ENCODE measurements at regions of chr16 and their contacts with region 1.

Region 1: DNA sequence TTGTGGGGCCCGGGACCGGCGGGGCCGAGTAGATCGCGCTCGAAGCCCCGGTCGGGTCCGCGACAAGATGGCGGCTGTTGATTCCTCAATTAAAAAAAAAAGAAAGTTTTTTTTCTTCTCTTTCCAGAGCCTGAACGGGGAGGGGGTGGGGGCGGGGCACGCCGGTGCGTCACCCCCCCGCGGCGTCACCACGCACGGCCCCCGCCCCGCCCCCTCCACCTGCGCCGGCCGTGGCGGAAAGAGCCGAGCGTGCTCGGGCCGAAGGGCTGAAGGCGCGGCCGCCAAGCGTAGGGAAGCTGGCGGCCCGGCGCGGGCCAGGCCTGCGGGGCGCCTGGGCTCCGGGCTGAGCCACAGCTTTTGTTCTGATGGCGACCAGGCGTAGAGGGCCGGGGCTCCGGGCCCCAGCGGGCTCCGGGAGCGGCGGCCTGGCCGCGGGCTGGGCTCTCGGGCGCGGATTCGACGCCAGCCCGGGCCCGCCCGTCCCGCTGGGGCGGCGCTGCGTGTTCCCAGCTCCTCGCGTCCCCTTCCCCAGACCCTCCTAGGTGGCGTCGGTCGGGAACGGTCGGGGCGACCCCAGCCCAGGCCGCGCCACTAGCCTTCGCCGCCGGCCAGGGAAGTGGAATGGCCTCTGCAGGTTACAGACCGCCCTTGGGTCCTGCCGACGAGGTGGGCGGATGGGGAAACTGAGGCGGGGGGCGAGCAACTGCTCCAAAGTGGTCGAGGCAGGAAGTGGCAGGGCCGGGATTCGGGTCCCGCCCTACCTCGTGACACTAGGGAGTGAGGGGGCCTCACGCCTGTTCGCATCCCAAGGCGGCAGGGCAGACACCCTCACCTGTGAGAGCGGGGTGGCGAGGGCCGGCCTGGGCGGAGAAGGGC is at the start of gene CREBBP:
- DNase-seq: peak; percentile 94
- ATAC-seq: peak; percentile 94
- total RNA-seq, gene CREBBP: 38.0 TPM

Region 2: DNA sequence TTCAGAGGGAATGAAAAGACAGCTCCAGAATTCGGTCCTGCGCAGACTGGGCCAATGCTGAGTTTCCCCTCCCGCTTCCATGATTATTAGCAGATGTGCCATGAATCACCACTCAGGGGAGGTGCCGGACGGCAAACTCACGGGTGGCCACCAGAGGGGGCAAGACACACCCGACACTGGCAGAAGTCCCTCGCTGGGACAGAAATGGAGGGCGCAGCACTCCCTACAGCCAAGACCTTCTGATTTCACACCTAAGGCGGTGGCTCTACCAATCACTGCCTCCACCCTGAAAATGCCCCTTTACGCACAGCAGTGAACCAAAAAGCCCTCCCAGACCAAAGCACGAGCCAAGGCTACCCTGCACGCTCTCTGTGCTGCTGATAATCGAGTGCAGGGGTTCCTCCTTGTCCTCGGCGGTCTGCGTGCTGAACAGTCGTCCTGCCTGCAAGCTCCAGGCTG is 190.4 kb before region 1 on chr16:
- intact Hi-C with region 1: loop called (anchors 2 kb)
- DNase-seq: peak; percentile 94
- ATAC-seq: peak; percentile 94

Region 3: GRCh38 chr16:3717235-3718018 is 163.4 kb before region 1 on chr16 and contains the start of gene TRAP1:
- intact Hi-C with region 1: loop called (anchors 10 kb)
- DNase-seq: peak; percentile 97
- ATAC-seq: peak; percentile 98
- total RNA-seq, gene TRAP1: 134 TPM

Region 4: DNA sequence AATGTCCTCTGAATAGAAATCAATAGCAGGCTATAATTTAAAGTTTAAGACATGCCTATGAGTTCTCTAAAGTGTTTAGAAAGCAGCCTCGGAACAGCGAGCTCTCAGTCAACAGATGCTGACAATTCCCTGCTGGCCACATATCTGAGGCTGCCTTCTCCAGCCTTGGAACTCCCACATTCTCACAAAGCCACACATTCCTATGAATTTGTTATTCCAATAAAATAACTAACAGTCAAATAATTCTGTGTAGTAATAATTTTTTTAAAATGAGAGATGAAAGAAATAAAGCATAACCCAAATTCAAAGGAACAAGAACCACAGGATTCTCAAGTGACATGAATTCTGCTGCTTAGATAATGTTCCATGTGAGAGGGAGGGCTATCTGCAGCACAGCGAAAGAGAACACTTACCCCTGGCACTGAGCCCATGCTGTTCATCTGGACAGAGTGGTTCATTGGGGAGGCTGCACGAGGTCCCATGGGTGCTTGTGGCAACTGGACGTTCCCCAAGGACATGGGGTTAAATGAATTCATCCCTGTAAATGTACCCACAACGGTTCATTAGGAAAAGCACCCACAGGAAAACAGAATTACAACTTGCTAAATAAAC is 106.6 kb before region 1 on chr16:
- intact Hi-C with region 1: loop called (anchors 5 kb)
- DNase-seq: no peak
- ATAC-seq: peak; percentile 83

Region 5: GRCh38 chr16:4064950-4065352 is 184.1 kb after region 1 on chr16:
- intact Hi-C with region 1: no loop called
- DNase-seq: no peak
- ATAC-seq: no peak

Region 6: GRCh38 chr16:5709889-5710288 is 1829.0 kb after region 1 on chr16:
- intact Hi-C with region 1: no loop called
- DNase-seq: no peak
- ATAC-seq: no peak